Gastrocnemius medialis (tissue), 4 donors: ENCODE measurements at regions of chr17 and their contacts with region 1.

Region 1: GRCh38 chr17:81294856-81295680 is at the start of gene SLC38A10:
- DNase-seq: peak; percentile 81 to 84
- ATAC-seq: peak; percentile 85 to 89
- H3K4me3 ChIP-seq: peak within 1 kb of the TSS; percentile 69 to 98 (median 92)
- H3K27ac ChIP-seq: peak within 1 kb of the TSS; percentile 91 to 99 (median 96)
- H3K4me1 ChIP-seq: peaks cover 25 to 27% of the 10 kb centered on the region in 2 donors
- H3K27me3 ChIP-seq: no peaks in the 10 kb centered on the region
- CTCF ChIP-seq: peak in 2 of 5 experiments; percentile 7 to 29
- POLR2A ChIP-seq: peak; percentile 97 to 99
- total RNA-seq, gene SLC38A10: 24.5 to 56.5 (median 28.8) TPM

Region 2: DNA sequence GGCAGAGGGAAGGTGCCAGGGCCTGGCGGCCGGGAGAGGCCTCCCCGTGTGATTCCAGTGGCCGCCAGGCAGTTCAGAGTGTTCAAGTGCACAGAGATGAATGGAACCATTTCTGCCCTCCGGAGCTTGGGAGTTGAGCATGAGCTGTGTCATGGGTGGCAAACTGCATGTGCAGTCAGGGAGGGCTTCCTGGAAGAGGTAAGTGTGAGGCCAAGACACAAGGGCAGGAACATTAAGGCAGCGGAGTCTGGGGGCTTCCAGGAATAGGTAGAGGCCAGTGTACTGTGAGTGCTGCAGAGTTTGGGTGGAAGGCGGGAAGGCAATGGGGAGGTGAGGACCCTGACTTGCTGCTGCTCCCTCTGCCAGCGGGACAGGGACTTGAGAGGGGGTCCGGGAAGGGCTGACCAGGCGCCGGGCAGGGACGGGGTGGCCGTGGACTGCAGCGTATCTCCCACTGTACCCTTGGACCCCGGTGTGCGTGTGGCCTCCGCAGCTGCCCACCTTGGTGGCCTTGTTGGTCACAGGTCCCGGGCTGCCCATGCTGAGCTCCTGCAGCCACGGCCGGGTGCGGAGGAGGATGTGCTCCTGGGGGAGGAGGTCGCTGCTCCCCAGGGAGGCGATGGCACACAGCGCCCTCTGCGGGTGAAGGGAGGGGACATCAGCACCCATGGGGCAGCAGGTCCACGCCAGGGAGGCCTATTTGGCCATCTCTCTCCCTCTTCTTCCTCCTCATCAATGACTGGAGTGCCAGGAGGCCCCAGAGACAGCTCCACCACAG is 64.8 kb before region 1 on chr17:
- in situ Hi-C with region 1: no loop called
- intact Hi-C with region 1: no loop called
- DNase-seq: no peak
- ATAC-seq: no peak
- H3K4me3 ChIP-seq: no peak overlapping the region
- H3K27ac ChIP-seq: no peak overlapping the region
- H3K4me1 ChIP-seq: no peaks in the 10 kb centered on the region
- H3K27me3 ChIP-seq: no peaks in the 10 kb centered on the region
- CTCF ChIP-seq: no peak
- POLR2A ChIP-seq: no peak

Region 3: GRCh38 chr17:81253358-81254131 is 41.5 kb before region 1 on chr17:
- in situ Hi-C with region 1: no loop called
- intact Hi-C with region 1: loop called (anchors 2 kb)
- DNase-seq: peak in 1 of 2 donors; percentile 28
- ATAC-seq: peak; percentile 21 to 22
- H3K4me3 ChIP-seq: no peak overlapping the region
- H3K27ac ChIP-seq: no peak overlapping the region
- H3K4me1 ChIP-seq: peaks cover 17 to 19% of the 10 kb centered on the region in 2 donors
- H3K27me3 ChIP-seq: no peaks in the 10 kb centered on the region
- CTCF ChIP-seq: peak; percentile 82 to 92 (median 87)
- POLR2A ChIP-seq: no peak

Region 4: GRCh38 chr17:81346090-81346907 is 51.2 kb after region 1 on chr17:
- in situ Hi-C with region 1: no loop called
- intact Hi-C with region 1: loop called (anchors 1 kb)
- DNase-seq: peak; percentile 98
- ATAC-seq: peak; percentile 53 to 59
- H3K4me3 ChIP-seq: peak overlapping the region; percentile 52 to 78 (median 70)
- H3K27ac ChIP-seq: peak overlapping the region; percentile 81 to 99 (median 94)
- H3K4me1 ChIP-seq: peaks cover 12 to 18% of the 10 kb centered on the region in 2 donors
- H3K27me3 ChIP-seq: no peaks in the 10 kb centered on the region
- CTCF ChIP-seq: no peak
- POLR2A ChIP-seq: peak; percentile 95

Region 5: GRCh38 chr17:81394921-81395599 is 100.0 kb after region 1 on chr17 and contains the start of gene BAHCC1:
- in situ Hi-C with region 1: loop called in 1 of 4 experiments (anchors 10 kb)
- intact Hi-C with region 1: loop called (anchors 2 kb)
- DNase-seq: peak; percentile 100
- ATAC-seq: peak; percentile 48 to 59
- H3K4me3 ChIP-seq: peak within 1 kb of the TSS; percentile 72 to 84 (median 82)
- H3K27ac ChIP-seq: peak within 1 kb of the TSS; percentile 98 to 99 (median 99)
- H3K4me1 ChIP-seq: peaks cover 25 to 33% of the 10 kb centered on the region in 2 donors
- H3K27me3 ChIP-seq: no peaks in the 10 kb centered on the region
- CTCF ChIP-seq: no peak
- POLR2A ChIP-seq: peak; percentile 98 to 99
- total RNA-seq, gene BAHCC1: 2.5 to 8.4 (median 5.8) TPM

Region 6: DNA sequence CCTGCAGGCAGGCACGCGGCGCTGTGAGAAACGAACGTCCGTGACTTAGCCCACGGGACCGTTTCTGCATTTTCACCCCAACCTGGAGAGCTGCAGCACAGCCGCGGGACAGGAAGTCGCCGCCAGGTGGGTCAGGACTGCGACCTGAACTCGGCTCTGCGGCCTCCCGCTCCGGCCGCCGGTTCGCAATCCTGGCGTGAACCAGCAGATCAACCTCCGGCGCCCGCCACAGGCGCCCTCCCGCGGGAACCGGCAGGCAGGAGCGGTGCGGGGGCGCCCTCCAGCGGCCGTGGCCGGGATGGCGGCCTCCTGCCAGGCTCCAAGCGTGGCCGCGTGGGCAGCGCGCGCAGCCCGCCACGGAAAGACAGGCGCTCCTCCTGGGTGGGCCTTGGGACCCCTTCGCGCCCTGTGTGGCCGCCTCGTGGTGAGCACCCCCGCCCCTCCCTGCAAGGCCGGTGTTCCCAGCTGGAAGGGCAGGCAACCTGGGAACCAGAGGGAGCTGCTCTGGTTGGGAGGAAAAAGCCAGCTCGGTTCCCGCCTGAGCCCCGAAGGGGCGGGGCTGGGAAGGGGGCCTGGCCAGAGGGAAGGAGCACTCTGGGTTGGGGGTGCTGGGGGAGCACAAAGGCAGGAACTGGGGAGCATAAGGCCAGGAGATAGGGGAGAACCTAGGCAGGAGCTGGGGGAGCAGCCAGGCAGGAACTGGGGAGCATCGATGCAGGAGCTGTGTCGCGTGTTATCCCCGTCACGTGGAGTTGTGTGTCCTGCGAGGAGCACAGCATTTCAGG is 189.3 kb after region 1 on chr17:
- in situ Hi-C with region 1: loop called in 2 of 4 experiments (anchors 5 to 10 kb)
- intact Hi-C with region 1: loop called (anchors 1 kb)
- DNase-seq: peak; percentile 76 to 84
- ATAC-seq: peak; percentile 56 to 60
- H3K4me3 ChIP-seq: peak overlapping the region; percentile 41 to 74 (median 58)
- H3K27ac ChIP-seq: peak overlapping the region in 3 of 4 donors; percentile 52 to 57 (median 57)
- H3K4me1 ChIP-seq: peaks cover 30 to 38% of the 10 kb centered on the region in 2 donors
- H3K27me3 ChIP-seq: no peaks in the 10 kb centered on the region
- CTCF ChIP-seq: peak; percentile 87 to 100 (median 100)
- POLR2A ChIP-seq: no peak